ENCODE measurements at regions of chr16 and their contacts with region 1.

Region 1: GRCh38 chr16:62846399-62847057 is 810.3 kb upstream of the CDH8 start:
- DNase-seq: no peak
- ATAC-seq: no peak
- H3K4me3 ChIP-seq: no peak overlapping the region
- H3K27ac ChIP-seq: no peak overlapping the region
- H3K4me1 ChIP-seq: no peaks in the 10 kb centered on the region
- CTCF ChIP-seq: no peak
- EP300 ChIP-seq: no peak
- POLR2A ChIP-seq: no peak
- RAD21 ChIP-seq: no peak

Region 2: GRCh38 chr16:62876133-62876532 is 29.6 kb after region 1 on chr16:
- CTCF ChIA-PET with region 1: interaction called, 4 read pairs
- POLR2A ChIA-PET with region 1: interaction called, 10 read pairs
- DNase-seq: no peak
- ATAC-seq: no peak
- H3K4me3 ChIP-seq: no peak overlapping the region
- H3K27ac ChIP-seq: no peak overlapping the region
- H3K4me1 ChIP-seq: no peaks in the 10 kb centered on the region
- CTCF ChIP-seq: no peak
- EP300 ChIP-seq: no peak
- POLR2A ChIP-seq: no peak
- RAD21 ChIP-seq: no peak